Mammary epithelial cell (primary cell): ENCODE measurements at regions of chr6 and their contacts with region 1.

Region 1: GRCh38 chr6:53794720-53795253 is at the start of gene LRRC1:
- DNase-seq: peak; percentile 89
- H3K4me3 ChIP-seq: peak within 1 kb of the TSS; percentile 89 to 97 (median 93)
- H3K27ac ChIP-seq: peak within 1 kb of the TSS; percentile 77
- H3K4me1 ChIP-seq: peaks cover 31% of the 10 kb centered on the region
- H3K27me3 ChIP-seq: no peaks in the 10 kb centered on the region
- CTCF ChIP-seq: no peak
- total RNA-seq, gene LRRC1: 18.2 to 19.2 TPM

Region 2: DNA sequence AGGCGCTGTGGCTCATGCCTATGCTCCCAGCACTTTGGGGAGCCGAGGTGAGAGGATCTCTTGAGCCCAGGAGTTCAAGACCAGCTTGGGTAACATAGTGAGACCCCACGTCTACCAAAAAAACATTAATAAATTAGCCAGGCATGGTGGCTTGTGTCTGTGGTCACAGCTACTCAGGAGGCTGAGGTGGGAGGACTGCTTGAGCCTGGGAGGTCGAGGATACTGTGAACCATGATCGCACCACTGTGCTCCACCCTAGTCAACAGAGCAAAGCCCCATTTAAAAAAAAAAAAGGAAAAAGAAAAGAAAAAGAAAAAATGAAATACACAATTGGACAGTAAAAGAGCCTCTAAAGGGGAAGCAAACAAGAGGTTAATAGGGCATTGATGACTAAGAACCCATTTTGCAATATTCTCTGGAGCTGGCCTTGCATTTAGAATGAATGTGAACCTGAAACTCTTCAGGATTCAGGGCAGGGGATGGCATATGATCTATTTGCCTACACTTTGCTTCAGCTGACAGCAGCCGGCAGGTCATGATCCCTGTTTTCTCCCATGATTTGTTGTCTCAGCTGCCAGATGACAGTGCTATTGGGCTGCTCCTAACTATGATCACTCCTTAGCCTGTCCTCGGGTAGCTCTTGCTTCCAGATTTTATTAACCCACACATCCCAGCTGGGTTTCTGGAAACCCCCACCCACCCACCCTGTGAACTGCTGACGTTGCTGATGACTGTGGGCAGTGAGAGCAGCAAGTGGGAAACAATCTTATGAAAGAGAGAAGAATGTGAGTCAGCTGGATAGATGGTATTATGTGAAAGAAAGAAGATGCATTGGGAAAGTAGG is 362.2 kb before region 1 on chr6:
- CTCF ChIA-PET with region 1: no interaction called
- dilution Hi-C with region 1: no loop called
- in situ Hi-C with region 1: no loop called
- intact Hi-C with region 1: no loop called
- DNase-seq: peak; percentile 65
- H3K4me3 ChIP-seq: no peak overlapping the region
- H3K27ac ChIP-seq: no peak overlapping the region
- H3K4me1 ChIP-seq: no peaks in the 10 kb centered on the region
- H3K27me3 ChIP-seq: peaks cover 3% of the 10 kb centered on the region
- CTCF ChIP-seq: no peak

Region 3: GRCh38 chr6:53725791-53726431 is 68.9 kb before region 1 on chr6:
- CTCF ChIA-PET with region 1: interaction called, 5 read pairs
- dilution Hi-C with region 1: no loop called
- in situ Hi-C with region 1: no loop called
- intact Hi-C with region 1: loop called (anchors 1 kb)
- DNase-seq: peak; percentile 48
- H3K4me3 ChIP-seq: no peak overlapping the region
- H3K27ac ChIP-seq: no peak overlapping the region
- H3K4me1 ChIP-seq: peaks cover 3% of the 10 kb centered on the region
- H3K27me3 ChIP-seq: no peaks in the 10 kb centered on the region
- CTCF ChIP-seq: peak; percentile 98 to 99

Region 4: GRCh38 chr6:53746442-53747103 is 48.2 kb before region 1 on chr6:
- CTCF ChIA-PET with region 1: no interaction called
- dilution Hi-C with region 1: no loop called
- in situ Hi-C with region 1: no loop called
- intact Hi-C with region 1: no loop called
- DNase-seq: peak; percentile 89
- H3K4me3 ChIP-seq: no peak overlapping the region
- H3K27ac ChIP-seq: peak overlapping the region; percentile 59
- H3K4me1 ChIP-seq: peaks cover 24% of the 10 kb centered on the region
- H3K27me3 ChIP-seq: no peaks in the 10 kb centered on the region
- CTCF ChIP-seq: no peak

Region 5: DNA sequence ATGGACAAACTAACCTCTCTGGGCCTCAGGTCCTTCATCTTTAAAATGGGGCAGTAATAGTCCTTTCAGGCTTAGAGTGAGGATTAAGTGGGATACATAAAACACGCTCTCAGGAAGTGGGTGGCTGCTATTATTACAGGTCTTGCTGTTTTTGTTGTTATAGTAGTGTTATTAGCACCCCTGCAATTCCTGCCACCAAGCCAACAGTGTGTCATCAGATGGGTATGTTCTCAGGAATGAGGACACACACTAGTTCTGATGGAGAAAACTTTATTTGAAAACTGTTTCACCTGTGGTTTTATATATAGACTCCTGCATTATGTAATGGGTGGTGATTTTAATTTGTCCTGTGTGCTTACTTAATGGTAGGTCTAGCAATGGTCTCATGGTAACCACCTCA is 131.7 kb after region 1 on chr6:
- CTCF ChIA-PET with region 1: interaction called, 8 read pairs
- dilution Hi-C with region 1: no loop called
- in situ Hi-C with region 1: no loop called
- intact Hi-C with region 1: loop called (anchors 10 kb)
- DNase-seq: peak; percentile 40
- H3K4me3 ChIP-seq: no peak overlapping the region
- H3K27ac ChIP-seq: no peak overlapping the region
- H3K4me1 ChIP-seq: peaks cover 32% of the 10 kb centered on the region
- H3K27me3 ChIP-seq: no peaks in the 10 kb centered on the region
- CTCF ChIP-seq: no peak